Natural killer cell (primary cell): ENCODE measurements at regions of chr22 and their contacts with region 1.

Region 1: GRCh38 chr22:46035742-46036557 is 59.0 kb upstream of the WNT7B start:
- DNase-seq: peak; percentile 99 to 100
- ATAC-seq: peak; percentile 85 to 98 (median 89)
- H3K4me3 ChIP-seq: peak overlapping the region; percentile 64
- H3K4me3 Mint-ChIP-seq: peak overlapping the region; percentile 85
- H3K27ac ChIP-seq: peak overlapping the region; percentile 99
- H3K27ac Mint-ChIP-seq: peak overlapping the region; percentile 91 to 93
- H3K4me1 ChIP-seq: peaks cover 12% of the 10 kb centered on the region
- H3K4me1 Mint-ChIP-seq: peaks cover 11% of the 10 kb centered on the region in 2 donors
- H3K27me3 ChIP-seq: no peaks in the 10 kb centered on the region
- H3K27me3 Mint-ChIP-seq: no peaks in the 10 kb centered on the region
- CTCF ChIP-seq: no peak

Region 2: GRCh38 chr22:46013460-46014416 is 22.2 kb before region 1 on chr22:
- intact Hi-C with region 1: loop called (anchors 2 kb)
- DNase-seq: peak; percentile 82 to 85
- ATAC-seq: peak; percentile 92
- H3K4me3 ChIP-seq: peak overlapping the region; percentile 92
- H3K4me3 Mint-ChIP-seq: peak overlapping the region; percentile 86
- H3K27ac ChIP-seq: peak overlapping the region; percentile 90
- H3K27ac Mint-ChIP-seq: peak overlapping the region; percentile 48 to 93
- H3K4me1 ChIP-seq: peaks cover 20% of the 10 kb centered on the region
- H3K4me1 Mint-ChIP-seq: peaks cover 0 to 13% of the 10 kb centered on the region in 2 donors
- H3K27me3 ChIP-seq: no peaks in the 10 kb centered on the region
- H3K27me3 Mint-ChIP-seq: no peaks in the 10 kb centered on the region
- CTCF ChIP-seq: peak; percentile 64

Region 3: GRCh38 chr22:46057762-46058420 is 21.9 kb after region 1 on chr22:
- intact Hi-C with region 1: loop called (anchors 2 kb)
- DNase-seq: peak in 1 of 2 donors; percentile 64
- ATAC-seq: peak; percentile 73 to 77 (median 76)
- H3K4me3 ChIP-seq: no peak overlapping the region
- H3K4me3 Mint-ChIP-seq: peak overlapping the region; percentile 68
- H3K27ac ChIP-seq: peak overlapping the region; percentile 69
- H3K27ac Mint-ChIP-seq: peak overlapping the region; percentile 87 to 89
- H3K4me1 ChIP-seq: peaks cover 49% of the 10 kb centered on the region
- H3K4me1 Mint-ChIP-seq: peaks cover 39% of the 10 kb centered on the region in 2 donors
- H3K27me3 ChIP-seq: no peaks in the 10 kb centered on the region
- H3K27me3 Mint-ChIP-seq: no peaks in the 10 kb centered on the region
- CTCF ChIP-seq: no peak

Region 4: GRCh38 chr22:46071451-46072109 is 35.6 kb after region 1 on chr22:
- intact Hi-C with region 1: loop called (anchors 5 kb)
- DNase-seq: peak in 1 of 2 donors; percentile 67
- ATAC-seq: peak; percentile 1 to 22 (median 10)
- H3K4me3 ChIP-seq: peak overlapping the region; percentile 40
- H3K4me3 Mint-ChIP-seq: peak overlapping the region; percentile 89
- H3K27ac ChIP-seq: no peak overlapping the region
- H3K27ac Mint-ChIP-seq: peak overlapping the region in 1 of 2 donors; percentile 77
- H3K4me1 ChIP-seq: peaks cover 56% of the 10 kb centered on the region
- H3K4me1 Mint-ChIP-seq: peaks cover 52 to 57% of the 10 kb centered on the region in 2 donors
- H3K27me3 ChIP-seq: no peaks in the 10 kb centered on the region
- H3K27me3 Mint-ChIP-seq: no peaks in the 10 kb centered on the region
- CTCF ChIP-seq: no peak

Region 5: GRCh38 chr22:46229701-46230100 is 193.8 kb after region 1 on chr22:
- intact Hi-C with region 1: no loop called
- DNase-seq: no peak
- ATAC-seq: no peak
- H3K4me3 ChIP-seq: no peak overlapping the region
- H3K4me3 Mint-ChIP-seq: no peak overlapping the region
- H3K27ac ChIP-seq: no peak overlapping the region
- H3K27ac Mint-ChIP-seq: no peak overlapping the region
- H3K4me1 ChIP-seq: peaks cover 8% of the 10 kb centered on the region
- H3K4me1 Mint-ChIP-seq: no peaks in the 10 kb centered on the region
- H3K27me3 ChIP-seq: no peaks in the 10 kb centered on the region
- H3K27me3 Mint-ChIP-seq: no peaks in the 10 kb centered on the region
- CTCF ChIP-seq: no peak

Region 6: DNA sequence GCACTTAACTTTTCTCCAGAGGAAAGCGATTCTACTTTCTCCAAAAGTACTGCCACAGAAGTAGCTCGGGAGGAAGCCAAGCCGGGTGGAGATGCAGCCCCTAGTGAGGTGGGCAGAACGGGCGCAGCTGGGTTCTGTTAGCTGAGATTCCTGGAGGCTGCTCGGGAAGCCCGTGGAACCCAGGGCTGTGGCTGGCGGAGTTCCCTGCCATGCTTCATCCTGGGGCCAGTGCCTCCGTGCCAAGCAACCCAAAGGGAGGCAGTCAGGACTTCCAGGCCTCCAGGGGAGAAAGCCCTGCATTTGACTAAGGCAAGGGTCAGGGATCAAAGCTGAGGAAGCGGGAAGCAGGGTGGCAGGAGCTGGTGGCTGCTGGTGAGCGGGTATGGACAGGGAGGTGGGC is 292.8 kb after region 1 on chr22:
- intact Hi-C with region 1: no loop called
- DNase-seq: no peak
- ATAC-seq: no peak
- H3K4me3 ChIP-seq: no peak overlapping the region
- H3K4me3 Mint-ChIP-seq: no peak overlapping the region
- H3K27ac ChIP-seq: no peak overlapping the region
- H3K27ac Mint-ChIP-seq: no peak overlapping the region
- H3K4me1 ChIP-seq: no peaks in the 10 kb centered on the region
- H3K4me1 Mint-ChIP-seq: no peaks in the 10 kb centered on the region
- H3K27me3 ChIP-seq: no peaks in the 10 kb centered on the region
- H3K27me3 Mint-ChIP-seq: no peaks in the 10 kb centered on the region
- CTCF ChIP-seq: no peak